ENCODE measurements at regions of chr6 and their contacts with region 1.

Region 1: GRCh38 chr6:116287689-116288282 is 8.1 kb upstream of the TSPYL1 start:
- DNase-seq: no peak
- H3K4me3 ChIP-seq: no peak overlapping the region
- H3K27ac ChIP-seq: no peak overlapping the region
- H3K27me3 ChIP-seq: no peaks in the 10 kb centered on the region
- CTCF ChIP-seq: peak; percentile 84

Region 2: GRCh38 chr6:116145803-116146675 is 141.7 kb before region 1 on chr6:
- CTCF ChIA-PET with region 1: no interaction called
- POLR2A ChIA-PET with region 1: no interaction called
- DNase-seq: no peak
- H3K4me3 ChIP-seq: no peak overlapping the region
- H3K27ac ChIP-seq: no peak overlapping the region
- H3K27me3 ChIP-seq: no peaks in the 10 kb centered on the region
- CTCF ChIP-seq: no peak

Region 3: DNA sequence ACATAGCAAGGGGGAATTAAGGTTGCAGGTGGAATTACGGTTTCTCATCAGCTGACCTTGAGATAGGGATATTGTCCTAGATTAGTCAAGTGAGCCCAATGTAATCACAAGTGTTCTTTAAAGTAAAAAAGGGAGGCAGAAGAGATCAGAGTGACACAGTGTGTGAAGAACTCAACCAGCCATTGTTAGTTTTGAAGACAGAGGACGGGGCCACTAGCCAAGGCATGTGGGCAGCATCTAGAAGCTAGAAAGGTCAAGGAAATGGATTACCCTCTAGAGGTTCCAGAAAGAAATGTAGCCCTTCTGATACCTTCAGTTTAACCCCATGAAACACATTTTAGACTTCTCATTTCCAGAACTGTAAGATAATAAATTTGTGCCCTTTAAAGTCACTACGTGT is 10.5 kb after region 1 on chr6:
- CTCF ChIA-PET with region 1: interaction called, 13 read pairs
- POLR2A ChIA-PET with region 1: no interaction called
- DNase-seq: no peak
- H3K4me3 ChIP-seq: no peak overlapping the region
- H3K27ac ChIP-seq: no peak overlapping the region
- H3K27me3 ChIP-seq: no peaks in the 10 kb centered on the region
- CTCF ChIP-seq: no peak

Region 4: GRCh38 chr6:116352515-116353471 is 65.0 kb after region 1 on chr6:
- CTCF ChIA-PET with region 1: interaction called, 11 read pairs
- POLR2A ChIA-PET with region 1: no interaction called
- DNase-seq: no peak
- H3K4me3 ChIP-seq: no peak overlapping the region
- H3K27ac ChIP-seq: peak overlapping the region; percentile 79
- H3K27me3 ChIP-seq: no peaks in the 10 kb centered on the region
- CTCF ChIP-seq: no peak

Region 5: GRCh38 chr6:116411284-116411623 is 123.5 kb after region 1 on chr6:
- CTCF ChIA-PET with region 1: interaction called, 10 read pairs
- POLR2A ChIA-PET with region 1: no interaction called
- DNase-seq: no peak
- H3K4me3 ChIP-seq: no peak overlapping the region
- H3K27ac ChIP-seq: no peak overlapping the region
- H3K27me3 ChIP-seq: no peaks in the 10 kb centered on the region
- CTCF ChIP-seq: no peak

Region 6: GRCh38 chr6:116450769-116451740 is 163.3 kb after region 1 on chr6:
- CTCF ChIA-PET with region 1: interaction called, 25 read pairs
- POLR2A ChIA-PET with region 1: no interaction called
- DNase-seq: no peak
- H3K4me3 ChIP-seq: no peak overlapping the region
- H3K27ac ChIP-seq: no peak overlapping the region
- H3K27me3 ChIP-seq: no peaks in the 10 kb centered on the region
- CTCF ChIP-seq: no peak

Region 7: DNA sequence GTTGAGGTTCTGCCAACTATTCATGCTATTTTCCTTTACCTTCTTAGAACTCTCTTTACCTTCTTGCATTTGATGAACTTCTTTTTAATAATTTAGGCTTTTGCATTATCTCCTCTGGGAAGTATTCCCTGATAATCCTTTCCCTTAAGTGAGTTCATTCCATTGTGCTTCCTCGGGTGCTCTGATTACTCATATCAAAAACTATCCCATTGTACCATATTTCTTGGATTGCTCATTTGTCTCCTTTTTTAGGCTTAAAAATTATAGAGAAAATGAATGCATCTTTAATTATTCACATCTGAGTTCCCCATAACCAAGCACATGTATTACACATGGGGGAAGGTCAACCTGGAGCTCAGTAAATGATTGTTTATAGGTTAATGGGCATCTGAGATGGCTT is 268.3 kb after region 1 on chr6:
- CTCF ChIA-PET with region 1: interaction called, 102 read pairs
- POLR2A ChIA-PET with region 1: no interaction called
- DNase-seq: no peak
- H3K4me3 ChIP-seq: no peak overlapping the region
- H3K27ac ChIP-seq: peak overlapping the region; percentile 49
- H3K27me3 ChIP-seq: no peaks in the 10 kb centered on the region
- CTCF ChIP-seq: no peak

Region 8: DNA sequence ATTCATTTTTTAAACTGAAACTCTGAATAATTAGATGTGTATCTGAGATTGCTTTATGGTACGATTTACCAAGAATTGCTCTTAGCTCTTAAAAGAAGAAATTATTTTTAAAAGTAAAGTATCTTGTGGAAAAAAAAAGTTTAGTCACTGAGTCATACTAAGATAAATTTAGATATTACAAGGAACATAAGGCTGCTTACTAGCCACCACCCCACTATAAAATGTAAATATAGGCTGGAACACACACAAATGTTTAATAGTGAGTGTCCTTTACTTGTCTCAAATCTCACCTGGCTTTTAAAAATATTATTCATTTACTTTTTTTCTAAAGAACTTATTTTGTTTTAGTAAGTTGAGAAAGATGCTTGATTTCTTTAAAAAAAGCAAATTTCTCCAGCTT is 606.9 kb after region 1 on chr6:
- CTCF ChIA-PET with region 1: no interaction called
- POLR2A ChIA-PET with region 1: no interaction called
- DNase-seq: no peak
- H3K4me3 ChIP-seq: no peak overlapping the region
- H3K27ac ChIP-seq: no peak overlapping the region
- H3K27me3 ChIP-seq: no peaks in the 10 kb centered on the region
- CTCF ChIP-seq: no peak

Measured in AG04450 (cell line).